BJ (cell line): ENCODE measurements at regions of chr10 and their contacts with region 1.

Region 1: GRCh38 chr10:89490596-89491335 is 44.6 kb downstream of the SLC16A12 start:
- DNase-seq: no peak
- H3K4me3 ChIP-seq: no peak overlapping the region
- H3K27me3 ChIP-seq: no peaks in the 10 kb centered on the region
- CTCF ChIP-seq: no peak

Region 2: DNA sequence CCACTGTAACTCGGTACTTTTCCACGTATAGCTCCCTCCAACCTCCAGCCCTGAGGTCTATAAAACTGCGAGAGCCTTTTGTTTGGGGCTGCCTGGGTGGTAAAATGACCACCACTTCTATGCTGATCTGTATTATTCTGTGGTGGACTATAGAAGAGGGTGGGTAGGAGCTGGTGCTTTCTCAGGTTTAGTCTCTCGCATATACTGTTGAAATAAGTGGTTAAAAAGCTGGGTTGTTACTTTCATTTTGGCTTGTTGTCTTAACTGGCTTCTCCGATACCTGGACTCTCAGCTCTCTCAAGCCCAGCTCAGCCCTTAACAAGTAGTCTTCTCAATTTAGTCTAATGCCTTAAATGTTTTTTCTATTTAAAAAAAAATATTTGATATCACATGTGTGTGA is 280.9 kb after region 1 on chr10:
- CTCF ChIA-PET with region 1: no interaction called
- POLR2A ChIA-PET with region 1: interaction called, 18 read pairs
- DNase-seq: no peak
- H3K4me3 ChIP-seq: no peak overlapping the region
- H3K27me3 ChIP-seq: no peaks in the 10 kb centered on the region
- CTCF ChIP-seq: no peak